Pancreas (tissue), 10 donors: ENCODE measurements at regions of chr18 and their contacts with region 1.

Region 1: DNA sequence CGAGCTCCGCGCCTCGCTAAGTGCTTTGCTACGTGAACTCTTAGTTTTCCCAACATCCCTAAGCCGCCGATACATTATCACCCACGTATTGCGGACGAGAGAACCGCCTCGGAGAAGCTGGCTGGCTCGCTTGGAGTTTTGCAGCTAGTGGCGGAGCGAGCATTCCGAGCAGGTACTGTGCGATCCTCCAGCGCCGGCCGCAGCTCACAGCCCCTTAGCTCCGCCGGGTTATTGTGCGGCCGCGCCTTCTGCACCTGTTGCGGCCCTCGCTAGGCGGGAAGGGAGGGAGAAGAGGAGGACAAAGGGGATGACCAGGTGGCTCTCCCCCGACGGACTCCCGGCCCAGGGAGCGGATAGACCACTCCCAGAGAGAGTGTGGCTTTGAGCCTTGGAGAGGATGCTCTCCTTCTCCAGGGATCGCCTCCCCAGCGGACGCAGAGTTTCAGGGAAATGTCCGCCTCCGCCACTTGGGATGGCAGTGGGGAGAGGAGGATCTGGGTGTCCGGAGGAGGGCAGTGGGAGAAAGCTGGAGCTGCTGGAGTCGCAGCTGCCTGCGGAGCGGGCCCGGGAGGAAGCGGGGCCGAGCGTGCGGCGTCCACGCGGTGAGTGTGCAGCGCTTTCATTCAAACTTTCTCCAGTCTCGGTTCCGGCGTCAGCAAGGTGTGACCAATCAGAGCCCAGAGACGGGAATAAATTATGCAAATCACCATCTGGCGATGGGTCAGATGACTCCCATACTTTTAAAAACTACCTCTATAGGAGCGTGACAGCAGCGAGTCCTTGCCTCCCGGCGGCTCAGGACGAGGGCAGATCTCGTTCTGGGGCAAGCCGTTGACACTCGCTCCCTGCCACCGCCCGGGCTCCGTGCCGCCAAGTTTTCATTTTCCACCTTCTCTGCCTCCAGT is at the start of gene LIPG:
- DNase-seq: peak; percentile 17 to 69 (median 40)
- ATAC-seq: peak; percentile 38 to 75 (median 66)
- H3K4me3 ChIP-seq: peak within 1 kb of the TSS; percentile 4 to 45 (median 26)
- H3K27ac ChIP-seq: no peak within 1 kb of the TSS
- H3K4me1 ChIP-seq: peaks cover 0 to 24% (median 0%) of the 10 kb centered on the region in 3 donors
- H3K27me3 ChIP-seq: peaks cover 0 to 3% (median 0%) of the 10 kb centered on the region in 4 donors
- CTCF ChIP-seq: no peak
- total RNA-seq, gene LIPG: 0.39 to 8.2 (median 1.2) TPM

Region 2: DNA sequence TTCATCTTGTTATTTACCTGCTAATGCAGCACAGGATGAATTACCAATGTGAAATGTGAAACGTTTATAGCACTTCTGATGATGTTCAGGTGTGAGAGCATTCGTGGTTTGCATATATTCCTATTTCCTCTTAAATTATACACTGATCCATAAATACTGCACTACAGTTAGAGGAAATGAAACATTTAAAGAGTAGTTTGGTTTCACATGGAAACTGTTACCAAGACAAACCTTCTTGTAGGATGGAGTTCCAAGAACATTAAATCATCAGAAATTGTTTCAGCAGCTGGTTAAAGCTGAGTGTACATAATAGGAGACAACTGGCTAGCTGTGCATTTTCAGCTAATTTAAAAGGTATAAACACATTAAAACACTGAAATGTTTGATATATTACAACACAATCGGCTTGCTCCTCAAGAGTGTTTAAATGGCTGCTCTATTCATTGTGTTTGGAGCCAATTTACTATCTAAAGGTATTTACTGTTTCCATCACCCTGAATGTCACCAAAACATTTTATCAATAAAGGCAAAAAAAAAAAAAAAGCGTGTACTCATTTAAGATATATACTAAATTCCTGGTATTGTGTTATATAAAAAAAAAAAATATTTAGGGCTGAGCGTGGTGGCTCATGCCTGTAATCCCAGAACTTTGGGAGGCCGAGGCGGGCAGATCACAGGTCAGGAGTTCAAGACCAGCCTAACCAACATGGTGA is 201.7 kb before region 1 on chr18:
- intact Hi-C with region 1: no loop called
- DNase-seq: no peak
- ATAC-seq: peak in 3 of 4 donors; percentile 17 to 65 (median 44)
- H3K4me3 ChIP-seq: no peak overlapping the region
- H3K27ac ChIP-seq: no peak overlapping the region
- H3K4me1 ChIP-seq: peaks cover 0 to 14% (median 2%) of the 10 kb centered on the region in 3 donors
- H3K27me3 ChIP-seq: no peaks in the 10 kb centered on the region
- CTCF ChIP-seq: no peak

Region 3: GRCh38 chr18:49412679-49413078 is 148.9 kb before region 1 on chr18:
- intact Hi-C with region 1: no loop called
- DNase-seq: no peak
- ATAC-seq: no peak
- H3K4me3 ChIP-seq: no peak overlapping the region
- H3K27ac ChIP-seq: no peak overlapping the region
- H3K4me1 ChIP-seq: peaks cover 0 to 12% (median 3%) of the 10 kb centered on the region in 3 donors
- H3K27me3 ChIP-seq: no peaks in the 10 kb centered on the region
- CTCF ChIP-seq: no peak

Region 4: DNA sequence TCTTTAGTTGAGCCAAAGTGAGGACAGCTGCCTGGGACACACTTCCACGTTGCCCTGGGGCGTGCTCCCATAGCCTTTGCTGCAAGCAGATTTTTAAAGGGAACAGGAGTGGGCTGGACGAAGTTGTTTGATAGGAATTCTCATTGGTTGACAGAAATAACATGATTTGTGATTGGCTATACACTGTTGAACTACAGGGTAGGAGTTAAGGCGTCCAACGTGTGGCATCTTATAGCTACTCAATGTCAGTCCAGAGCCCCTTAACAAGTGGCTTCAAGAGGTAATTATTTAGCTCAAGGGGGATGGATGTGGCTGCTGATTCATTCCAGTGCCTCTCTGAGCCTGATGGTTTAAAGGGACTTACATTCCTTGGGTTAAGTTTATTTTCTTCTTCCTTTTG is 186.3 kb after region 1 on chr18:
- intact Hi-C with region 1: no loop called
- DNase-seq: no peak
- ATAC-seq: no peak
- H3K4me3 ChIP-seq: no peak overlapping the region
- H3K27ac ChIP-seq: no peak overlapping the region
- H3K4me1 ChIP-seq: no peaks in the 10 kb centered on the region
- H3K27me3 ChIP-seq: no peaks in the 10 kb centered on the region
- CTCF ChIP-seq: no peak

Region 5: GRCh38 chr18:49768051-49768391 is 206.5 kb after region 1 on chr18:
- intact Hi-C with region 1: loop called in 1 of 3 experiments (anchors 10 kb)
- DNase-seq: peak in 3 of 6 donors; percentile 19 to 42 (median 27)
- ATAC-seq: peak in 3 of 4 donors; percentile 74 to 85 (median 81)
- H3K4me3 ChIP-seq: no peak overlapping the region
- H3K27ac ChIP-seq: no peak overlapping the region
- H3K4me1 ChIP-seq: no peaks in the 10 kb centered on the region
- H3K27me3 ChIP-seq: no peaks in the 10 kb centered on the region
- CTCF ChIP-seq: peak in 3 of 4 donors; percentile 11 to 41 (median 27)